Natural killer cell (primary cell): ENCODE measurements at regions of chr10 and their contacts with region 1.

Region 1: GRCh38 chr10:84375011-84375410 is 46.6 kb downstream of the CCSER2 start:
- DNase-seq: peak in 1 of 2 donors; percentile 81
- ATAC-seq: peak in 2 of 3 donors; percentile 63 to 64
- H3K4me3 ChIP-seq: no peak overlapping the region
- H3K4me3 Mint-ChIP-seq: no peak overlapping the region
- H3K27ac ChIP-seq: no peak overlapping the region
- H3K27ac Mint-ChIP-seq: peak overlapping the region in 1 of 2 donors; percentile 47
- H3K4me1 ChIP-seq: no peaks in the 10 kb centered on the region
- H3K4me1 Mint-ChIP-seq: peaks cover 32 to 49% of the 10 kb centered on the region in 2 donors
- H3K27me3 ChIP-seq: no peaks in the 10 kb centered on the region
- H3K27me3 Mint-ChIP-seq: no peaks in the 10 kb centered on the region
- CTCF ChIP-seq: peak; percentile 79

Region 2: DNA sequence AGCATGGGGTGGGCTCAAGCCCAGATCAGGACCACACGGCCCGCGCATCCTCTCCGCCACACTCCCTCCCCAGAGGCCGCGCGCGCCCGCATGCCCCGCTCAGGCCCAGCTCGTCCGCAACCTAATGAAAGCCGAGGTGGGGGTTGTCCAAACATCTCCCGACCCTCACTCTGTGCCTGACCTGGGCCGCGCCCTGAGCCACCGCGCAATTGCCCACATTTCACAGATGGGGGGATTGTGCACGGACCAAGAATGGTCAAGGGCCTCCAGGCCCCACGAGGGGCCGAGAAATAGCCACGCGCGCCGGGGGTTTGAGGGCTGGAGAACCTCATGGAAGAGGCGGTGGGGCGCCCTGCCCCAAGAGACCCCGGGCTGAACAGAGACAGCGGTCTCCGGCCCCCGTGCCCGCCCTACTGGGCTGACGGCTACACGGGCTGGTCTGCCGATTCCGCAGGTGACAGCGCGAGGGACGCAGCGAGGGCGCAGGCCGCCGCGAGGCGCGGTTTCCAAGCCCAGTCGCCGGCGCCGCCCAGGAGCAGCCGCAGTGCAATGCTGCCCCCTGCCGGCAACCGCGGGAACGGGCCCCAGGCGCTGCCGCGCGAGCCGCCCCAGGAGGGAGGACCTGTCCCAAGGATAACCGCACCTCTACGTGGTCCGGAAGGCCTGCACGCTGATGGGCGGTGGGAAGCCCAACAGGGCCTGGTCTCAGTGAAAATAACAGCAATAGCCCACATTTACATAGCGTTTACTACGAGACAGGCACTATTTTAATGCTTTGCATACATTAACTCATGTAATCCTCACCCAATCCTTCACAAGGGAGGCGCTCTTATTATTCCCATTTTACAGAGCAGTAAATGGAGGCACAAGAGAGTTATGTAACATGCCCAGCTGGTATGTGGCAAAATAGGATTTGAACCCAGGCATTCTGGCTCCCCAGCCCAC is 2002.1 kb after region 1 on chr10:
- intact Hi-C with region 1: loop called (anchors 5 kb)
- DNase-seq: peak; percentile 80 to 84
- ATAC-seq: peak; percentile 89 to 99 (median 99)
- H3K4me3 ChIP-seq: no peak overlapping the region
- H3K4me3 Mint-ChIP-seq: no peak overlapping the region
- H3K27ac ChIP-seq: no peak overlapping the region
- H3K27ac Mint-ChIP-seq: no peak overlapping the region
- H3K4me1 ChIP-seq: peaks cover 5% of the 10 kb centered on the region
- H3K4me1 Mint-ChIP-seq: no peaks in the 10 kb centered on the region
- H3K27me3 ChIP-seq: peaks cover 20% of the 10 kb centered on the region
- H3K27me3 Mint-ChIP-seq: peaks cover 24 to 34% of the 10 kb centered on the region in 2 donors
- CTCF ChIP-seq: peak; percentile 98